ENCODE measurements at regions of chr16 and their contacts with region 1.

Region 1: GRCh38 chr16:78122774-78123315 is 23.4 kb downstream of the WWOX start:
- DNase-seq: peak; percentile 65
- ATAC-seq: peak; percentile 58
- H3K4me3 ChIP-seq: no peak overlapping the region
- H3K4me3 Mint-ChIP-seq: no peak overlapping the region
- H3K27ac ChIP-seq: no peak overlapping the region
- H3K27ac Mint-ChIP-seq: no peak overlapping the region
- H3K4me1 ChIP-seq: no peaks in the 10 kb centered on the region
- H3K4me1 Mint-ChIP-seq: peaks cover 2% of the 10 kb centered on the region
- H3K27me3 ChIP-seq: no peaks in the 10 kb centered on the region
- H3K27me3 Mint-ChIP-seq: no peaks in the 10 kb centered on the region
- CTCF ChIP-seq: peak; percentile 78

Region 2: DNA sequence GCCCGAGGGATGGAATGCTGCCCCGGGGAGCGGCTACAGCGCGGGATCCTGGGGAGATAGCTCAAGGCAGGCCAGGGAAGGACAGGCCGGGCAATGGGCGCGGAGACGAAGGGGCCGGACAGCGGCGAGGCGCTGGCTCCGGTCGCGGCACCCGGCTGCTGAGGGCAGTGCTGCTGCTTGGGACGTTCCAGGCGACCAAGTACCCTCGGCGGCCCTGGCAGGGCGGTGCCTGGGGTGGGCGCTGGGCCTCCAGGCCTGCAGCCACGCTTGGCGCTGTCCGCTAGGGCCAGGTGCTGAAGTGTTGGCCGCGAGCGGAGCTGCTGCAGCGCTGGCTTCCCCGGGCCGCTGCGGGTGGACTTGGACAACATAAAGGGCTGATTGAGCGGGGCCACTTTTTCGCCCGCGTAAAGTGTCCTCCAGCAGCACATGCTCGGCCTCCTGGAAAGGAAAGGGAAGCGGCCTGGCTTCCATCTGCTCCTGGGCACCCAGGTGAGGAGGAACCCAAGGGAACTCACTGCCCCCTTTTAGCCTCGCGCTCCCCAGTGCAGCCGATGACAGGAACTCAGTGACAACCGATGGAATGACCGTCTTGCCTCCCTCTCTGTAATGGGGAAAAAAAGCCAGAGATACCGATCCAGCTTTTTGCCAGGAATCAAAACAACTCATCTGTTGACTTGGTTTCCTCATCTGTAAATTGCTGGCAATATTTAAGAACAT is 76.8 kb before region 1 on chr16:
- CTCF ChIA-PET with region 1: no interaction called
- POLR2A ChIA-PET with region 1: no interaction called
- intact Hi-C with region 1: no loop called
- DNase-seq: no peak
- ATAC-seq: no peak
- H3K4me3 ChIP-seq: no peak overlapping the region
- H3K4me3 Mint-ChIP-seq: no peak overlapping the region
- H3K27ac ChIP-seq: no peak overlapping the region
- H3K27ac Mint-ChIP-seq: no peak overlapping the region
- H3K4me1 ChIP-seq: no peaks in the 10 kb centered on the region
- H3K4me1 Mint-ChIP-seq: no peaks in the 10 kb centered on the region
- H3K27me3 ChIP-seq: peaks cover 0 to 10% (median 0%) of the 10 kb centered on the region in 4 experiments
- H3K27me3 Mint-ChIP-seq: peaks cover 32% of the 10 kb centered on the region
- CTCF ChIP-seq: no peak

Region 3: DNA sequence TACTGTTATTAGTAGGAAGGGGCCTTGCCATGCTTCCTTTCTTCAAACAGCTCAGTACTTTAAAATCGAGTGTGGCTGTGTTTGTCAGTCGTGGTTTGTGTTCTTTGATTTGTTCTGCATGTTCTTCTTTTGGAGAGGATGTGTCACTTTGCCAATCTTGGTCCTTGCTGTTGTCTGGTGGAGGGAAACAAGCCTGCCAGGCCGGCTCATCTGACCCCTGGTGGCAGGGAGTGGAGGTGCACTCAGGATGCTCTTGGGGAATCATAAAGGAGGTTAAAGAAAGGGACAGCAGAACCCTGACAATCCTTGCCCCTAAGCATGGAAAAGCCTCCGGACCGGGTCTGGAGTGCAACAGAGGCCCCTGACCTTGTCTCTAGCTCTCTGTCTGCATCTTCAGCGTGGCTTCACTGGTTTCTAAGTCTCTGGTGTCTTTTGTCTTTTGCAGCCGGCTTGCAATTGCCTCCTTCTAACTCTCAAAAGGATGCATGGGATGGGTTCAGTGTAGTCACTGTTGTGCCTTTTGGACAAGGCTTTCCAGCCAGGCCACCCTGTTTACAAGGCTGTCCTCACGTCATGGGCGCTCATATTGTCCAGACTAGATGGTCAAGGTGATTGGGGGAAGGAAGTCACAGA is 112.4 kb after region 1 on chr16:
- CTCF ChIA-PET with region 1: interaction called, 15 read pairs
- POLR2A ChIA-PET with region 1: no interaction called
- intact Hi-C with region 1: no loop called
- DNase-seq: peak; percentile 59
- ATAC-seq: peak; percentile 69
- H3K4me3 ChIP-seq: no peak overlapping the region
- H3K4me3 Mint-ChIP-seq: no peak overlapping the region
- H3K27ac ChIP-seq: no peak overlapping the region
- H3K27ac Mint-ChIP-seq: no peak overlapping the region
- H3K4me1 ChIP-seq: no peaks in the 10 kb centered on the region
- H3K4me1 Mint-ChIP-seq: no peaks in the 10 kb centered on the region
- H3K27me3 ChIP-seq: no peaks in the 10 kb centered on the region
- H3K27me3 Mint-ChIP-seq: no peaks in the 10 kb centered on the region
- CTCF ChIP-seq: peak; percentile 90

Region 4: DNA sequence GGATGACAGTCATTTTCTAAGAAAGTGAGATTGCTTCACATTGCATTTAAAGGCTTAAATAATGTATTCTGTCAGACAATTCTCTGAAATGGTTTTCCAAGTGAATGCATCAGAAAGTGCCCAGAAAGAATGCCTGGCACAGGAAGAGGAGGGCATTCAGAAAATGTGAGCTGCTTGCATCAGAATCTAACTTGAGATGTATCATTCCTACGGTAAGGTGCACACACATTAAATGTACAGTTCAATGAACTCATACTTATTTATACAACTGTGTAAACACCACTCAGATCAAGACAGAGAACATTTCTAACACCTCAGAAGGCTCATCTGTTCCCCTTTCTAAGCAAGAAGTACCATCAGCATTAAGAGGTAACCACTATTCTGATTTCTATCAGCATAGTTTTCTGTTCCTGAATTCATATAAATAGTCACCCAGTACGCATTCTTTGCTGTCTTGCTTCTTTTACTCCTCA is 839.6 kb after region 1 on chr16:
- CTCF ChIA-PET with region 1: no interaction called
- POLR2A ChIA-PET with region 1: no interaction called
- intact Hi-C with region 1: no loop called
- DNase-seq: peak; percentile 63
- ATAC-seq: peak; percentile 67
- H3K4me3 ChIP-seq: peak overlapping the region in 1 of 5 experiments; percentile 11
- H3K4me3 Mint-ChIP-seq: peak overlapping the region; percentile 50
- H3K27ac ChIP-seq: peak overlapping the region in 1 of 2 donors; percentile 45
- H3K27ac Mint-ChIP-seq: peak overlapping the region; percentile 54
- H3K4me1 ChIP-seq: peaks cover 36 to 39% of the 10 kb centered on the region in 2 donors
- H3K4me1 Mint-ChIP-seq: peaks cover 46% of the 10 kb centered on the region
- H3K27me3 ChIP-seq: peaks cover 0 to 25% (median under 1%) of the 10 kb centered on the region in 4 experiments
- H3K27me3 Mint-ChIP-seq: peaks cover 9% of the 10 kb centered on the region
- CTCF ChIP-seq: no peak

Measured in B cell (primary cell).